ENCODE measurements at regions of chr2 and their contacts with region 1.

Region 1: DNA sequence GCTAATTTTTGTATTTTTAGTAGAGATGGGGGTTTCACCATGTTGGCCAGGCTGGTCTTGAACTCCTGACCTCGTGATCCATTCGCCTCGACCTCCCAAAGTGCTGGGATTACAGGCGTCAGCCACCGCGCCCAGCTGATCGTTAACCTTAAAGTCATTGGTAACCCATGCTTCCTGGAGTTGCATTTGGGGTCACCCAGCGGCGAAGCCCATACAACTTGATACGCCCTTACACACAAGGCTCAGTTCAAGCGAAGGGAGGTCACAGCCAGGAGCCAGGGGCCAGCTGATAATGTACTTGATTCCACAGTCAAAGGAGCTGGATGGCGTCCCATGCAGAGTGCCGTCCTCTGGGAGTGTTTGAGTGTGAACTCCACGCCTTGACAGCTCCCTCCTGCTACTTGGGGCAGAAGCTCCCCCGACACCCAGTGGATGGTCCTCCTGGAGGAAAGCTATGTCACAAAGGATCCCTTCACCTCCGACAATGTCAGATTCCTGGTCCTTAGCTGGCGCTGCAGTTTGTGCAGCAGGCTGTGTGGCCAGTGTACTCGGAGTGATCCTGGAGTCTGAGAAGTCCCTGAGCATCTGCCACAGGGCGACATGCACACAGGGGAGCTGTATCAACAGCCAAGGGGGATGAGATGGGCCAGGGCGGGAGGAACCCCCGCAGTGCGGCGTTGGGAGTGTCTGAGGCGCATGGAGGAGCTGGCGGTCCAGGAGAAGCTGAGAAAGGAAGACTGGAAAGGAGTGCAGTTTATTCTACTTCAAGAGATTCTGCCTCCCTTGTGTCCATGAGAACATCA is 7.9 kb downstream of the CLHC1 start:
- DNase-seq: no peak
- ATAC-seq: peak; percentile 42 to 45; a peak in 5 of 6 replicates
- H3K4me3 ChIP-seq: peak overlapping the region; percentile 49
- H3K27ac ChIP-seq: peak overlapping the region; percentile 86 to 97; a peak in 4 of 6 replicates
- H3K4me1 ChIP-seq: peaks cover 6% of the 10 kb centered on the region; the same call in 2 of the 3 replicates
- CTCF ChIP-seq: no peak
- EP300 ChIP-seq: no peak
- POLR2A ChIP-seq: no peak
- RAD21 ChIP-seq: no peak

Region 2: DNA sequence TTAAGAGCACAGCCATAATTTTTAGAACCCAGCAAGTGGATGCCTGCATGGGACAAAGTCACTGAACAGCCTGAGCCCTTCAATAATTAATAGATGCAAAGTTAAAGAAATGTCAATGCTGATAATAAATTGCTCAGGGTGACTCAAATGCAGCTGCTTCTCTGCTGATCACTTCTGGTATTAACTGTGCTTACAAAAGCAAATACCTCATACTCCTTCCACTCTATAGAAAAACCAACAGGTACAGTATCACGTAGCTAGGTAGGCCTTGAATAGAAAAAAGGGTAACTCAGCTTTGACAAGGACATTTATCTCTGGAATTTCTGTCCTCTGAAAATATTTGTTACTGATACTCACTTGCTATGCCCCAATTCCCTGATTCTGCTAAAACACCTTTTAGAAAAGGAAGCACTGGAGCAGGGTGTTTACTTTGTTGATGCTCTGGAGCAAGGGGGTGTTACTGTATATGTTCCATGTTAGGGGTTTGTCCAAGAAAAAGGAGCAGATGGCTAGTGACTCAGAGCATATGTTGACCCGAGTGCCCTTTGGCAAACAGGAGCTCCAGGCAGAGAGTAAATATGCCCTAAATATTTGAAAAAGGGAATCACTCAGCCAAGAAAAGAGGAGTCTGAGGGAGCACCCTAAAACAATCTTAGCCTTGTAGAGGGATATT is 114.8 kb before region 1 on chr2:
- CTCF ChIA-PET with region 1: no interaction called
- POLR2A ChIA-PET with region 1: no interaction called
- DNase-seq: peak; percentile 36 to 91
- ATAC-seq: peak; percentile 80 to 85
- H3K4me3 ChIP-seq: no peak overlapping the region
- H3K27ac ChIP-seq: peak overlapping the region; percentile 92 to 93
- H3K4me1 ChIP-seq: peaks cover 84% of the 10 kb centered on the region
- CTCF ChIP-seq: no peak
- EP300 ChIP-seq: peak; percentile 33 to 72; a peak in 3 of 5 replicates
- POLR2A ChIP-seq: no peak
- RAD21 ChIP-seq: peak; percentile 37 to 51

Region 3: GRCh38 chr2:55213822-55214221 is 10.3 kb before region 1 on chr2:
- CTCF ChIA-PET with region 1: interaction called, 10 read pairs
- POLR2A ChIA-PET with region 1: interaction called, 7 read pairs
- DNase-seq: no peak
- ATAC-seq: no peak
- H3K4me3 ChIP-seq: no peak overlapping the region
- H3K27ac ChIP-seq: no peak overlapping the region
- H3K4me1 ChIP-seq: no peaks in the 10 kb centered on the region
- CTCF ChIP-seq: no peak
- EP300 ChIP-seq: no peak
- POLR2A ChIP-seq: no peak
- RAD21 ChIP-seq: no peak

Measured in A549 (cell line).